H1 (cell line): ENCODE measurements at regions of chr12 and their contacts with region 1.

Region 1: DNA sequence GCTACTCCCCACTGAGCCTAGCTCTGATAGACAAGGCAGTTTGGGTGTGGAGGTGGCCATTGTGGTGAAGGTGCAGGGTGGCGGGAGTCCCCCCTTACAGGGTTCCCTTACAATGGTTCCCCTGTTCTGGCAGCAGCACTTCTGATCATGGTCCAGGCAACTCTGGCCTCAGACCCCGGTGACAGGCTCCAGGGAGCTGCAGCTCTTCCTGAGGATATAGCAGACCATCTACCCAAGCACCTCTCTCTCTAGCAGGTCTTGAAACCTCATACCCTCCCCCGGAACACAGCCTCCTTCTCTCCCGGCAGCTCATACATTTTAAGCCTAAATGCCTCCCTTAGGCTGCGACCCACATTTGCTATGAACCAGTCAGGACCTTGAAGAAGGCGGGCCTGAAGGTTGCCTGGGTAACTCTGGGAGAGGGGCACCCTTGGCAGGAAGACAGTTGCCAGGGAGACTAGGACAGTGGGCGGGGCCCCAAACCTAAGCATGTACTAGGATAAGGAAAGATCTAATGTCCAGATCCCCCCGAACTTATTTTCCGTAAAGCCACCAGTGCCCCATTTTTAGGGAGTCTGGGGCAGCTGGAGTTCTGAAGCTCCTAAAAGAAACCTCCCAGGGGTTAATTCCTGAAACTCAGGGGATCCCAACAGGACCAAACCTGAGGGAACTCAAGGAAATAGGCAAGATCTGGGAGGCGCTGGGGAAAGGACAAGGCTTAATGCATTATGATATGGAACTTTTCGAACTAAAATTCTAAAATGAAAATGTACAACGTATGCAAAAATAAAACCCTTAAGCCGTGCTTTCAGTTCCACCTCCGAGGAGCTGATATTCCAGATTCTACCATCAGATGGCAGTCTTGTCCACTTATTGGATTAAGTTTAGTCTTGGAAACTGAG is 4.5 kb upstream of the GDF11 start:
- DNase-seq: peak in 1 of 2 experiments; percentile 88
- H3K4me3 ChIP-seq: peak overlapping the region; percentile 45 to 65 (median 56)
- H3K27ac ChIP-seq: peak overlapping the region; percentile 46; the same call in 1 of the 2 replicates
- H3K4me1 ChIP-seq: peaks cover 2 to 23% (median 10%) of the 10 kb centered on the region in 4 experiments; a peak in 6 of 7 replicates
- H3K27me3 ChIP-seq: no peaks in the 10 kb centered on the region
- CTCF ChIP-seq: peak in 2 of 3 experiments; percentile 70 to 84; a peak in 3 of 4 replicates
- EP300 ChIP-seq: no peak
- POLR2A ChIP-seq: peak in 1 of 2 experiments; percentile 61; a peak in 2 of 3 replicates
- RAD21 ChIP-seq: peak; percentile 91 to 92

Region 2: DNA sequence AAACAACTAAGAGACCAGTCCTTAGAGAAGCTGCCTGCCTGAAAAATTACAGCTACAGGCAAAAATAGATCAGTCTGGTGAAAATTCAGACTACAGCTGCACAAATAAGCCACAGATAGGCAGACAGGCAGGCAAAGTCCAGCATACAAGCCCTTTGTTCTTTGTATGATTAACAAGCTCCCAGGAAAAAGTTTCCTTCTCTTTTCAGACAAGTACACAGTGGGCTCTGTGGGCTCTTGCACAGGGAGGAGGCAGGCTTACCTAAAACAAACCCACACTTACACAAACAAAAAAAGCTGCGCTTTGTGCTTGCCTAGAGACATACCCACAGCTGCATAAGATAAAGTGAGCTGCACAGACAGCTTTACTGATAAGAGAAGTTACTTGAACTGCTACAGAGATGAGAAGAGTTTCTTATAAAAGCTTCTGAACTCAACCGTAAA is 238.5 kb before region 1 on chr12:
- CTCF ChIA-PET with region 1: no interaction called
- POLR2A ChIA-PET with region 1: no interaction called
- DNase-seq: no peak
- H3K4me3 ChIP-seq: no peak overlapping the region
- H3K27ac ChIP-seq: no peak overlapping the region
- H3K4me1 ChIP-seq: no peaks in the 10 kb centered on the region
- H3K27me3 ChIP-seq: no peaks in the 10 kb centered on the region
- CTCF ChIP-seq: no peak
- EP300 ChIP-seq: no peak
- POLR2A ChIP-seq: no peak
- RAD21 ChIP-seq: no peak

Region 3: DNA sequence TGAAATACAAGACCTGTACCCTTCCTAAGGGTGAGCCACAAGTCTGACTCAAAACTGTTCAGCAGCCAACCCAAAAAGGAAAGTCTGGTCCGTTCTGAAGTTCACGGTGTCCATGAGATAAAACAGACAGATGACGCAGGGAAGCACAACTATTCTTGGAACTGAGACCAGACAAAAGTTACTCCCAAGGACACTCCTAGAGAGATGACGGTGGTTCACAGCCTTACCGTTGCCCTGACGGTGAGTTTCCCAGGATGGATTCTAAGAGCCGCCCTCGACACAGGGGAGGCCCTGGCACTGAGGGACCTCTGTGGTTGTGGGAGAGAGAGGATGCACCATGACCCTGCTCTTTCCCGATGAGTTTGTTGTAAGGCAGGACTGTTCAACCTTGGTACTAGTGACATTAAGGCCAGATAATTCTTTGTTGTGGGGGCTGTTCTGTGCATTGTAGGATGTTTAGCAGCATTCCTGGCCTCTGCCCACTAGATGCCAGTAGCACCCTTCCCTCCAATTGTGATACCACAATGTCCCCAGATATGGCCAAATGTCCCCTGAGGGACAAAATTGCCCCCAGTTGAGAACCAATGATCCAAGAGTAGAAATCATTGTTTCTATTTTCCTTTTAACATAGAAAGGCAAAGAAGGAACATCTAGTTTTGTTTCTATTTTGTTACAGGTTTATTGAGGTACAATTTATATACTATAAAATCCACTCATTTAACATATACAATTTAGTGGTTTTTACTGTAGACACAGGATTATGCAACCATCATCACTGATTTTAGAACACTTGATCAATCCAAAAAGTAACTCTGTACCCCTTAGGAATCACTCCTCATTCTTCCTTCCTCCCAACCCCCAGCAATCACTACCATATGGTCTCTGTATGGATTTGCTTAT is 78.6 kb before region 1 on chr12:
- CTCF ChIA-PET with region 1: interaction called, 69 read pairs
- POLR2A ChIA-PET with region 1: interaction called, 4 read pairs
- DNase-seq: no peak
- H3K4me3 ChIP-seq: no peak overlapping the region
- H3K27ac ChIP-seq: no peak overlapping the region
- H3K4me1 ChIP-seq: no peaks in the 10 kb centered on the region
- H3K27me3 ChIP-seq: no peaks in the 10 kb centered on the region; a peak in 2 of 7 replicates
- CTCF ChIP-seq: peak; percentile 46 to 68 (median 66)
- EP300 ChIP-seq: no peak
- POLR2A ChIP-seq: no peak
- RAD21 ChIP-seq: peak; percentile 80 to 86

Region 4: GRCh38 chr12:55707841-55708694 is 30.3 kb before region 1 on chr12 and contains the start of gene ITGA7:
- CTCF ChIA-PET with region 1: interaction called, 32 read pairs
- POLR2A ChIA-PET with region 1: interaction called, 11 read pairs
- DNase-seq: peak; percentile 83 to 99
- H3K4me3 ChIP-seq: peak within 1 kb of the TSS; percentile 83 to 88 (median 86)
- H3K27ac ChIP-seq: 0 out of 2 replicates have a peak within 1 kb of the TSS, but pooled peaks have one; percentile 54
- H3K4me1 ChIP-seq: peaks cover 0 to 25% (median 8%) of the 10 kb centered on the region in 4 experiments; a peak in 5 of 7 replicates
- H3K27me3 ChIP-seq: peaks cover 0 to 3% (median 0%) of the 10 kb centered on the region in 4 experiments; a peak in 5 of 7 replicates
- CTCF ChIP-seq: no peak
- EP300 ChIP-seq: no peak
- POLR2A ChIP-seq: no peak
- RAD21 ChIP-seq: no peak
- total RNA-seq, gene ITGA7: 76.4 and 86.1 TPM in 2 replicates

Region 5: GRCh38 chr12:55765736-55766290 is 27.4 kb after region 1 on chr12:
- CTCF ChIA-PET with region 1: interaction called, 19 read pairs
- POLR2A ChIA-PET with region 1: interaction called, 809 read pairs
- DNase-seq: no peak
- H3K4me3 ChIP-seq: no peak overlapping the region
- H3K27ac ChIP-seq: no peak overlapping the region
- H3K4me1 ChIP-seq: no peaks in the 10 kb centered on the region
- H3K27me3 ChIP-seq: no peaks in the 10 kb centered on the region
- CTCF ChIP-seq: no peak
- EP300 ChIP-seq: no peak
- POLR2A ChIP-seq: no peak; a peak in 1 of 3 replicates
- RAD21 ChIP-seq: no peak

Region 6: GRCh38 chr12:55797068-55797467 is 58.7 kb after region 1 on chr12:
- CTCF ChIA-PET with region 1: interaction called, 145 read pairs
- POLR2A ChIA-PET with region 1: interaction called, 6 read pairs
- DNase-seq: no peak
- H3K4me3 ChIP-seq: no peak overlapping the region
- H3K27ac ChIP-seq: no peak overlapping the region
- H3K4me1 ChIP-seq: no peaks in the 10 kb centered on the region
- H3K27me3 ChIP-seq: no peaks in the 10 kb centered on the region
- CTCF ChIP-seq: peak in 2 of 3 experiments; percentile 52 to 55; a peak in 3 of 4 replicates
- EP300 ChIP-seq: no peak
- POLR2A ChIP-seq: no peak
- RAD21 ChIP-seq: peak; percentile 53 to 64

Region 7: DNA sequence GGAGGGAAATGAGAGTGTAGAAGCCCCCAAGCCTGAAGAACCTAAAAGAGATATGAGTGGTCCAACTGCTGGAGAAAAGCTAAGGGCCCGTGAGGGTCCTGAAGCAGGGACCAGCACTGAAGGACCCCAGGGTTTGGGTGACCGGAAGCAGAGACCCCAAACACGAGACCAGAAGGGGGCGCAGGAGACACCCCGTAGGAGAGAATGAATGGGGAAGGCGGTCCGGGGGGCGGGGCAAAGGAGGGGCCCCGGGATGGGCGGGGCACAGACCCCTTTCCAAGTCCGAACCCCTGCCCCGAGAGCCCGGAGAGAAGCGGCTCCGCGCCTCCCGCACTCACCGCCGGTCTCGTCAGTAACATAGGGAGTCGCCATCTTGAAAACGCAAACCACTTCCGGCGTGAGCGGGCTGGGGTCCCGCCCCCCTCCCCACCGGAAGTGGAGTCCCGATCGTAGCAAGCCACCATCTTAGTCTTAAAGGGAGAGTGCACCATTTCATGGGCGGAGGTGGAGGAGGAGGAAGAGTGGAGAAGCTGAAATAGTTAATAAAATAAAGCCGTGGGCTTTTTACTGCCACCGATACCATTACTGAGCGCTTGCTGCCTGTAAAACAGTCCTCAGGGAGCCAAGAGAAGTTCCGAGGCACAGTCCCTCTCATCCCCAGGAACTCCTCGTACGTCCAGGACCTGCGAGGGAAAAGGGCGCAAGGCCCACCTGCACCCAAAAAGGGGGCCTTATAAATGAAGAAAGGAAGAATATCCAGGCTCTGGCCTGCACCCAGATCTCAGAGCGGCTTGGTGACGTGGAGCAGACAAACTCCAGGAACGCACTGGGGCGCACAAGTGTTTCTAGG is 188.6 kb after region 1 on chr12:
- CTCF ChIA-PET with region 1: interaction called, 27 read pairs
- POLR2A ChIA-PET with region 1: interaction called, 24 read pairs
- DNase-seq: peak; percentile 84 to 94
- H3K4me3 ChIP-seq: peak overlapping the region; percentile 90 to 100 (median 94)
- H3K27ac ChIP-seq: peak overlapping the region; percentile 84
- H3K4me1 ChIP-seq: peaks cover 8 to 19% (median 11%) of the 10 kb centered on the region in 4 experiments; a peak in 6 of 7 replicates
- H3K27me3 ChIP-seq: peaks cover 0 to 6% (median 1%) of the 10 kb centered on the region in 4 experiments; a peak in 2 of 7 replicates
- CTCF ChIP-seq: peak; percentile 51 to 66 (median 59)
- EP300 ChIP-seq: no peak
- POLR2A ChIP-seq: peak in 1 of 2 experiments; percentile 39; a peak in 2 of 3 replicates
- RAD21 ChIP-seq: peak; percentile 23 to 35; a peak in 3 of 4 replicates

Region 8: DNA sequence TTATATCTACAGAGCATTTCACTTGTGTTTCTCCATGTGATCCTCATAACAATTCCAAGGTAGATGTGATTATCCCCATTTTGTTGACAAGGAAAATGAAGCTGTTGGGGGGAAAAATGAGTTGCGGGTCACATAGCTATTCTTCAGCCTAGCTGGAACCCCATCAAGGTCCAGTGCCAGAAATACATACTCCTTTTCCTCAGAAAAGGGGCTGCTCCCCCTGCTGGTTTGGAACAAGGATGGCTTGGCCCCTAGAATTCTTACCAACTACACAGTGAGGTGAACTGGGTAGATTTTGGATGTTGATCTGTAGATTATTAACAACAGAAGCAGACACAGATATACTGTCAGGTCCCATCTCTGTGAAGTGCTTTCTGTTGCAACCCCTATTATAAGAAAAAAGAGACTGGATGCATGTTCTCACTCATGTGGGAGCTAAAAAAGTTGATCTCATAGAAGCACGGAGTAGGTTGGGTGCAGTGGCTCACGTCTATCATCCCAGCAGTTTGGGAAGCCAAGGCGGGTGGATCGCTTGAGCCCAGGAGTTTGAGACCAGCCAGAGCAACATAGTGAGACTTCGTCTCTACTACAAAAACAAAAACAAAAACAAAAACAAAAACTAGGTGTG is 291.4 kb after region 1 on chr12:
- CTCF ChIA-PET with region 1: interaction called, 15 read pairs
- POLR2A ChIA-PET with region 1: no interaction called
- DNase-seq: peak in 1 of 2 experiments; percentile 52
- H3K4me3 ChIP-seq: no peak overlapping the region
- H3K27ac ChIP-seq: no peak overlapping the region
- H3K4me1 ChIP-seq: no peaks in the 10 kb centered on the region
- H3K27me3 ChIP-seq: no peaks in the 10 kb centered on the region
- CTCF ChIP-seq: peak; percentile 37 to 74 (median 66)
- EP300 ChIP-seq: no peak
- POLR2A ChIP-seq: no peak
- RAD21 ChIP-seq: peak; percentile 59 to 68